WTC11 (cell line): ENCODE measurements at regions of chr2 and their contacts with region 1.

Region 1: GRCh38 chr2:73293534-73294171 is at the start of gene EGR4:
- DNase-seq: peak; percentile 88
- ATAC-seq: peak; percentile 72
- H3K4me3 Mint-ChIP-seq: peak within 1 kb of the TSS; percentile 68
- H3K27ac Mint-ChIP-seq: no peak within 1 kb of the TSS
- H3K4me1 Mint-ChIP-seq: peaks cover 2% of the 10 kb centered on the region; the same call in 1 of the 2 replicates
- H3K27me3 Mint-ChIP-seq: peaks cover 97% of the 10 kb centered on the region
- CTCF ChIP-seq: no peak
- total RNA-seq, gene EGR4: 0.09 to 0.14 TPM (median 0.13 TPM) in 3 replicates

Region 2: GRCh38 chr2:73233154-73233931 is 60.3 kb before region 1 on chr2 and contains the start of gene PRADC1:
- CTCF ChIA-PET with region 1: interaction called, 24 read pairs
- POLR2A ChIA-PET with region 1: interaction called, 4 read pairs
- DNase-seq: peak; percentile 98
- ATAC-seq: peak; percentile 93
- H3K4me3 Mint-ChIP-seq: peak within 1 kb of the TSS; percentile 100
- H3K27ac Mint-ChIP-seq: peak within 1 kb of the TSS; percentile 90
- H3K4me1 Mint-ChIP-seq: peaks cover 29% of the 10 kb centered on the region
- H3K27me3 Mint-ChIP-seq: no peaks in the 10 kb centered on the region; the same call in 1 of the 2 replicates
- CTCF ChIP-seq: no peak
- total RNA-seq, gene PRADC1: 11.4 to 12.9 TPM (median 12.2 TPM) in 3 replicates

Region 3: GRCh38 chr2:73268830-73269685 is 24.6 kb before region 1 on chr2:
- CTCF ChIA-PET with region 1: interaction called, 37 read pairs
- POLR2A ChIA-PET with region 1: no interaction called
- DNase-seq: peak; percentile 82
- ATAC-seq: peak; percentile 78
- H3K4me3 Mint-ChIP-seq: peak overlapping the region; percentile 51
- H3K27ac Mint-ChIP-seq: no peak overlapping the region
- H3K4me1 Mint-ChIP-seq: peaks cover 14% of the 10 kb centered on the region
- H3K27me3 Mint-ChIP-seq: peaks cover 36% of the 10 kb centered on the region
- CTCF ChIP-seq: no peak

Region 4: GRCh38 chr2:73359915-73360697 is 66.5 kb after region 1 on chr2:
- CTCF ChIA-PET with region 1: interaction called, 25 read pairs
- POLR2A ChIA-PET with region 1: no interaction called
- DNase-seq: no peak
- ATAC-seq: no peak
- H3K4me3 Mint-ChIP-seq: no peak overlapping the region
- H3K27ac Mint-ChIP-seq: no peak overlapping the region
- H3K4me1 Mint-ChIP-seq: no peaks in the 10 kb centered on the region
- H3K27me3 Mint-ChIP-seq: peaks cover 19% of the 10 kb centered on the region
- CTCF ChIP-seq: 0 out of 2 replicates have a peak, but pooled peaks have one; percentile 14

Region 5: DNA sequence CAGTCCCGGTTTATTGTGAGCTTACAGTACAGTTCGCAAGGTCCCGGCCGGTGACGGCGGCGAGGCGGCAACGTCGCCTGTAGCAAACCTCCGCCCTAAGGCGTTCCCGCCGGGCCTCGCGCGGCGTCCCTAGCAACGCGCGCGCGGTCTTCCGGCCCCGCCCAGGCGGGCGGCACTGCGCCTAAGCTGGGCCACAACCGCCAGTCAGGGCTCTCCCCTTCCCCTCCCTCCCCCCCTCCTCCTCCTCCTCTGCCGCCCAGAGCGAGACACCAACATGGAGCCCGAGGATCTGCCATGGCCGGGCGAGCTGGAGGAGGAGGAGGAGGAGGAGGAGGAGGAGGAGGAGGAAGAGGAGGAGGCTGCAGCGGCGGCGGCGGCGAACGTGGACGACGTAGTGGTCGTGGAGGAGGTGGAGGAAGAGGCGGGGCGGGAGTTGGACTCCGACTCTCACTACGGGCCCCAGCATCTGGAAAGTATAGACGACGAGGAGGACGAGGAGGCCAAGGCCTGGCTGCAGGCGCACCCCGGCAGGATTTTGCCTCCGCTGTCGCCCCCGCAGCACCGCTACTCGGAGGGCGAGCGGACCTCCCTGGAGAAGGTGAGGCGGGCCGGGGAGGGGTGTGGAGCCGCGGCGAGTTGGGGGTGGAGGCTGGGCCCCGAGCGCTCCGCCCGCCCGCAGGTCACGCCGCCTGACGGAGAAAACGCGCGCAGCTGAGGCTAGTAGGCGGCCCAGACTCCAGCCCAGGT is 92.1 kb after region 1 on chr2 and contains the start of gene ALMS1:
- CTCF ChIA-PET with region 1: interaction called, 16 read pairs
- POLR2A ChIA-PET with region 1: no interaction called
- DNase-seq: peak; percentile 86
- ATAC-seq: peak; percentile 89
- H3K4me3 Mint-ChIP-seq: peak within 1 kb of the TSS; percentile 94
- H3K27ac Mint-ChIP-seq: peak within 1 kb of the TSS; percentile 93
- H3K4me1 Mint-ChIP-seq: peaks cover 17% of the 10 kb centered on the region
- H3K27me3 Mint-ChIP-seq: peaks cover 33% of the 10 kb centered on the region
- CTCF ChIP-seq: no peak
- total RNA-seq, gene ALMS1: 29.2 to 37.3 TPM (median 34.7 TPM) in 3 replicates